CD14-positive monocyte (primary cell): ENCODE measurements at regions of chr2 and their contacts with region 1.

Region 1: GRCh38 chr2:144596073-144596871 is 76.4 kb upstream of the ZEB2 start:
- DNase-seq: peak in 2 of 3 donors; percentile 57 to 68
- H3K4me3 ChIP-seq: peak overlapping the region in 1 of 3 experiments; percentile 48
- H3K4me3 Mint-ChIP-seq: peak overlapping the region in 1 of 2 donors; percentile 58
- H3K27ac ChIP-seq: peak overlapping the region in 1 of 2 donors; percentile 68
- H3K27ac Mint-ChIP-seq: peak overlapping the region; percentile 38 to 83 (median 74)
- H3K4me1 ChIP-seq: peaks cover 28 to 39% of the 10 kb centered on the region in 2 donors
- H3K4me1 Mint-ChIP-seq: peaks cover 45% of the 10 kb centered on the region
- H3K27me3 ChIP-seq: no peaks in the 10 kb centered on the region
- H3K27me3 Mint-ChIP-seq: no peaks in the 10 kb centered on the region
- CTCF ChIP-seq: no peak

Region 2: DNA sequence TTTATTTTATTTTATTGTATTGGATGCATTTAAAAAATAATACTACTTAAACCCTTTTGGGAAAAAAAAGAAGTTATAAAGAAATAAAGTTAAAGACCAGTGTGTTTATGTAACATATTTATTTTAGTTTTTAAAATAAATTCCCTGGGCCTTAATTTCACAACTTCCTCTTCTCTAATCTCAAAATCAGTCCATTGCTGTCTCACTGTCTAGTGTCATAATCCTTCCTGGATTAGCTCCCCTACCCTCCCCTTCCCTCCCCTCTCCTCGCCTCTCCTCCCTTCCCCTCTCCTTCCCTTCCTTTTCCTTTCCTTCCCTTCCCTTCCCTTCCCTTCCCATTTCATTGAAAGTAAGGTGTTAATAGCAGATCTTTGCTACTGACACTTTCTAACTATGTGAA is 36.0 kb before region 1 on chr2:
- intact Hi-C with region 1: loop called in 1 of 2 experiments (anchors 5 kb)
- DNase-seq: peak; percentile 46 to 75 (median 66)
- H3K4me3 ChIP-seq: no peak overlapping the region
- H3K4me3 Mint-ChIP-seq: no peak overlapping the region
- H3K27ac ChIP-seq: peak overlapping the region in 1 of 2 donors; percentile 88
- H3K27ac Mint-ChIP-seq: peak overlapping the region; percentile 73 to 91 (median 84)
- H3K4me1 ChIP-seq: peaks cover 27 to 31% of the 10 kb centered on the region in 2 donors
- H3K4me1 Mint-ChIP-seq: peaks cover 39% of the 10 kb centered on the region
- H3K27me3 ChIP-seq: no peaks in the 10 kb centered on the region
- H3K27me3 Mint-ChIP-seq: no peaks in the 10 kb centered on the region
- CTCF ChIP-seq: no peak